Activated CD4-positive, alpha-beta T cell treated with anti-CD3 and anti-CD28 coated beads, Interleukin-2, amount 10 ng/mL, durations not matched to agents 24 days and 14 days (primary cell): ENCODE measurements at regions of chr7 and their contacts with region 1.

Region 1: DNA sequence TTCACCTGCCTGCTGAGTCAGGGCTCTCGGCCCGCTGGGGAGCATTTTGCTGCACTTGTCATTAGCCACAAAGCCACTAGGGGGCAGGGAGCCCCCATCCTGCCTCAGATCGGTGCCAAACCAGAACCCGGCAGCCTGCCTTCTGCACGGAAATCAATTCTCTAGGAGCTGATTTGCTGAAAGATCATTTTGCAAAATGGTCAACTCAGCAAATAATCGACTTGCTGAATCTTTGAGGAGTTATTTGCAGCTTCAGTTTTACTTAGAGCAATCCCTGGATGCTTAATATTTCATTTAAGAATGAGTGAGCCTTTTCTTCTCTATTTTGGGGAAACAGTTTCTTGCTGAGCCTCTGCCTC is 1.7 kb upstream of the GIMAP8 start:
- DNase-seq: peak; percentile 96
- H3K4me3 Mint-ChIP-seq: peak overlapping the region; percentile 100
- H3K27ac Mint-ChIP-seq: peak overlapping the region; percentile 98
- H3K4me1 Mint-ChIP-seq: peaks cover 54% of the 10 kb centered on the region
- H3K27me3 Mint-ChIP-seq: no peaks in the 10 kb centered on the region

Region 2: GRCh38 chr7:150481186-150481920 is 32.6 kb after region 1 on chr7:
- intact Hi-C with region 1: loop called (anchors 1 kb)
- DNase-seq: peak; percentile 90
- H3K4me3 Mint-ChIP-seq: peak overlapping the region; percentile 86
- H3K27ac Mint-ChIP-seq: peak overlapping the region; percentile 100
- H3K4me1 Mint-ChIP-seq: peaks cover 87% of the 10 kb centered on the region
- H3K27me3 Mint-ChIP-seq: no peaks in the 10 kb centered on the region

Region 3: DNA sequence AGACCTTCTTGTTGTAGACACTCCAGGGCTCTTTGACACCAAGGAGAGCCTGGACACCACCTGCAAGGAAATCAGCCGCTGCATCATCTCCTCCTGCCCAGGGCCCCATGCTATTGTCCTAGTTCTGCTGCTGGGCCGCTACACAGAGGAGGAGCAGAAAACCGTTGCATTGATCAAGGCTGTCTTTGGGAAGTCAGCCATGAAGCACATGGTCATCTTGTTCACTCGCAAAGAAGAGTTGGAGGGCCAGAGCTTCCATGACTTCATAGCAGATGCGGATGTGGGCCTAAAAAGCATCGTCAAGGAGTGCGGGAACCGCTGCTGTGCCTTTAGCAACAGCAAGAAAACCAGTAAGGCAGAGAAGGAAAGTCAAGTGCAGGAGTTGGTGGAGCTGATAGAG is 71.4 kb after region 1 on chr7:
- intact Hi-C with region 1: loop called (anchors 1 kb)
- DNase-seq: peak; percentile 87
- H3K4me3 Mint-ChIP-seq: peak overlapping the region; percentile 99
- H3K27ac Mint-ChIP-seq: peak overlapping the region; percentile 97
- H3K4me1 Mint-ChIP-seq: peaks cover 37% of the 10 kb centered on the region
- H3K27me3 Mint-ChIP-seq: no peaks in the 10 kb centered on the region

Region 4: GRCh38 chr7:150620617-150621371 is 172.0 kb after region 1 on chr7:
- intact Hi-C with region 1: loop called (anchors 2 kb)
- DNase-seq: peak; percentile 67
- H3K4me3 Mint-ChIP-seq: peak overlapping the region; percentile 63
- H3K27ac Mint-ChIP-seq: peak overlapping the region; percentile 85
- H3K4me1 Mint-ChIP-seq: peaks cover 51% of the 10 kb centered on the region
- H3K27me3 Mint-ChIP-seq: no peaks in the 10 kb centered on the region

Region 5: DNA sequence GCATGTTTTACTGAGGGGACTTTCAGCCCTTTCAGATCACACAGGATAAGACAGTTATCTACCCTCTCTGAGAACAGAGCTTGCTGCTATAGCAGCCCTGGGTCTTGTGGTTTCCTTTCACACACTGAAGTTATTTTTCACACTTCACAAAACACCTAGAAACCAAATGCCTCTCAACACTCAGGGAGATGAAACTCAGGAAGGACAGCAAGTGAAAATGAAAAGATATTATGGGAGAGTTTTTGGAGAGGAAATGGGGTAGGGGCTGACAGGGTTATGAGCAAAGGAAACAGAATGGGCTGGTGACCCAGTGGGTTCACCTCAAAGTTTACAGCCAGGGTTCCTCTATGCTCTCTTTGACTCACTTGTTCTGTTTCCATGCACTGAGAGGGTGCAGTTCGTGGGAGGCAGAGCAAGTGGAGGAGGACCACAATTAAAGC is 219.7 kb after region 1 on chr7:
- intact Hi-C with region 1: loop called (anchors 2 kb)
- DNase-seq: peak; percentile 91
- H3K4me3 Mint-ChIP-seq: peak overlapping the region; percentile 43
- H3K27ac Mint-ChIP-seq: peak overlapping the region; percentile 93
- H3K4me1 Mint-ChIP-seq: peaks cover 69% of the 10 kb centered on the region
- H3K27me3 Mint-ChIP-seq: no peaks in the 10 kb centered on the region

Region 6: DNA sequence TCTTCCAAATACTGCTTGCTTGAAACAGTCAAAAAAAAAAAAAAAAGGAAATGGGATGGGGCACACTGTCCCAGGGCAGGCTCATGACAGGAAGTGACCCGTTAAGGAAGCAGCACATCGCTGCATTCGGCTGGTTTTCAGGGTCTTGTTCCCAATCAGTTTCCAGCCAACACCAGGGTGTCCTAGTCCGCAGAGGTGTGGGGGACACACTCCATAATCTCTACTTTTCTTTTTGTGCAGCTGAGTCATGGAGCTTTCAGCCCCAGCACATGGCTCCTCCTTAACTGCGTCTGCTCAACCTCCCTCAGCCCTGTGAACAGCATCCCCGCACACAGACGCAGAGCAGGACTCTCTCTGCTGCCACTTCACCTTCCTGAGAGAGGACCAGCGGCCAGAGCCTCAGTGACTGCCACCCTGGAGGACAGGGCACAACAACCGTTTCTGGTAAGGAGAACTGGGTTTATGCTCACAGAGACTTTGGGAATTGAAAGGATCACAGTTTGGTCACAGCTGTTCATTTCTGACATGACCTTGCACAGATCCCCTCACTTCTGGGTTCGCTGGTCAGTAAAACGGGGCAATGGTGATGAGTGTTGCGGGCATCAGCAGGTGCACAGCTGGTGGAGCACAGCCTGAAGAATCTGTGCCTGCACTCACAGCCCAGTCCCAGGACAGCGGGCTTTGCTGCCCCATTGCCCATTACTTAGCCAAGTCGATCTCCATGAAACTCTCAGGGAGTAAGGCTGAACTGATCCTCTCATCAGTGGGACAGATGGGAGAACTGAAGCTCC is 288.7 kb after region 1 on chr7 and contains the start of gene GIMAP5:
- intact Hi-C with region 1: loop called (anchors 1 kb)
- DNase-seq: peak; percentile 89
- H3K4me3 Mint-ChIP-seq: peak within 1 kb of the TSS; percentile 89
- H3K27ac Mint-ChIP-seq: peak within 1 kb of the TSS; percentile 94
- H3K4me1 Mint-ChIP-seq: peaks cover 69% of the 10 kb centered on the region
- H3K27me3 Mint-ChIP-seq: no peaks in the 10 kb centered on the region
- total RNA-seq, gene GIMAP5: 44.4 and 50.9 TPM in 2 replicates